CD8-positive, alpha-beta T cell (primary cell): ENCODE measurements at regions of chr14 and their contacts with region 1.

Region 1: DNA sequence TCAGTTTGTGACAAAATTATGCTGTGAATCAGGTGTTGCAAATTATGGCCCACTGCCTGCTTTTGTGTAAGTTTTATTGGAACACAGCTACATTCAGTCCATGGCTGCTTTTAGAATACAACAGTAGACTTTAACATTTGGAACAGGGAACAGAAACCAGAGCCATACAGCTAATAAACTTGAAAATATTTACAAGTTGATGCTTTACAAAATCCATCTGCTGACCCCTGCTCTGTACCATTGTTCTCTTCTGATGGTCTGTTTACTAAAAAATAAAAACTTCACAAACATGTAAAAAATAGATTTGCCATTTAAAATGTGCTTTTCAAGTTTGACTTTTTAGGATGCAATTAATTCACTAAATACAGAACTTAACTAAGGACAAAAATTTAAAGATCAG is 20.8 kb downstream of the PSMA3 start:
- DNase-seq: no peak
- ATAC-seq: no peak
- H3K4me3 ChIP-seq: no peak overlapping the region
- H3K4me3 Mint-ChIP-seq: no peak overlapping the region
- H3K27ac ChIP-seq: no peak overlapping the region
- H3K27ac Mint-ChIP-seq: no peak overlapping the region
- H3K4me1 ChIP-seq: no peaks in the 10 kb centered on the region
- H3K4me1 Mint-ChIP-seq: peaks cover 26% of the 10 kb centered on the region
- H3K27me3 ChIP-seq: no peaks in the 10 kb centered on the region
- H3K27me3 Mint-ChIP-seq: no peaks in the 10 kb centered on the region
- CTCF ChIP-seq: no peak

Region 2: GRCh38 chr14:58280954-58281787 is 15.8 kb after region 1 on chr14:
- CTCF ChIA-PET with region 1: no interaction called
- POLR2A ChIA-PET with region 1: no interaction called
- intact Hi-C with region 1: loop called in 1 of 2 experiments (anchors 2 kb)
- DNase-seq: peak in 5 of 9 experiments; percentile 25 to 68 (median 43)
- ATAC-seq: peak; percentile 81
- H3K4me3 ChIP-seq: no peak overlapping the region
- H3K4me3 Mint-ChIP-seq: peak overlapping the region; percentile 65
- H3K27ac ChIP-seq: peak overlapping the region; percentile 42 to 64
- H3K27ac Mint-ChIP-seq: peak overlapping the region; percentile 96
- H3K4me1 ChIP-seq: peaks cover 42% of the 10 kb centered on the region
- H3K4me1 Mint-ChIP-seq: peaks cover 68% of the 10 kb centered on the region
- H3K27me3 ChIP-seq: no peaks in the 10 kb centered on the region
- H3K27me3 Mint-ChIP-seq: no peaks in the 10 kb centered on the region
- CTCF ChIP-seq: no peak